Activated B cell treated with CpG ODN at 0.5 μM for 24 hours (primary cell): ENCODE measurements at regions of chr5 and their contacts with region 1.

Region 1: GRCh38 chr5:39074016-39074886 is at the start of gene RICTOR:
- DNase-seq: peak; percentile 92
- ATAC-seq: peak; percentile 81
- H3K4me3 Mint-ChIP-seq: peak within 1 kb of the TSS; percentile 97
- H3K27ac Mint-ChIP-seq: peak within 1 kb of the TSS; percentile 96
- H3K4me1 Mint-ChIP-seq: peaks cover 53% of the 10 kb centered on the region
- H3K27me3 Mint-ChIP-seq: no peaks in the 10 kb centered on the region
- CTCF ChIP-seq: no peak
- total RNA-seq, gene RICTOR: 46.4 and 51.8 TPM in 2 replicates

Region 2: DNA sequence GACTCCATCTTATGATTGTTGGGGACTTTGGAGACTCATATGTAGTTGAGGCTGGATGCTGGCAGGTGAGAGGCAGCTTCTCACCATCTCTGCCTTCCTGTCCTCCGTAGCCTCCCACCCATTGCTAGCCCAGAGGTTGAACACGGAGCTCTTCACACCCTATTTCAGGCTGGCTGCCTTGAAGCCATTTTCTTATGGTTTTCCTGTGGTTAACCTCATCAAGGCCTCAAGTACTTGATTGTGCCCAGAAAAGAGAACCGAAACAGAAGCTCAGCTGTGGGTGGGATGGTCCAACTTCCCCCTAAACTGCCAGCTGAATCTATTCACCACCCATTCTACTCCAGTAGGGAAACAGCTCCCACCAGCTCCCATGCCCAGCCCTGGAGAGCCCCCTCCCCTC is 620.7 kb before region 1 on chr5:
- CTCF ChIA-PET with region 1: no interaction called
- POLR2A ChIA-PET with region 1: no interaction called
- intact Hi-C with region 1: loop called (anchors 1 kb)
- DNase-seq: no peak
- ATAC-seq: peak; percentile 90
- H3K4me3 Mint-ChIP-seq: no peak overlapping the region
- H3K27ac Mint-ChIP-seq: no peak overlapping the region
- H3K4me1 Mint-ChIP-seq: peaks cover 15% of the 10 kb centered on the region
- H3K27me3 Mint-ChIP-seq: peaks cover 61% of the 10 kb centered on the region
- CTCF ChIP-seq: no peak

Region 3: DNA sequence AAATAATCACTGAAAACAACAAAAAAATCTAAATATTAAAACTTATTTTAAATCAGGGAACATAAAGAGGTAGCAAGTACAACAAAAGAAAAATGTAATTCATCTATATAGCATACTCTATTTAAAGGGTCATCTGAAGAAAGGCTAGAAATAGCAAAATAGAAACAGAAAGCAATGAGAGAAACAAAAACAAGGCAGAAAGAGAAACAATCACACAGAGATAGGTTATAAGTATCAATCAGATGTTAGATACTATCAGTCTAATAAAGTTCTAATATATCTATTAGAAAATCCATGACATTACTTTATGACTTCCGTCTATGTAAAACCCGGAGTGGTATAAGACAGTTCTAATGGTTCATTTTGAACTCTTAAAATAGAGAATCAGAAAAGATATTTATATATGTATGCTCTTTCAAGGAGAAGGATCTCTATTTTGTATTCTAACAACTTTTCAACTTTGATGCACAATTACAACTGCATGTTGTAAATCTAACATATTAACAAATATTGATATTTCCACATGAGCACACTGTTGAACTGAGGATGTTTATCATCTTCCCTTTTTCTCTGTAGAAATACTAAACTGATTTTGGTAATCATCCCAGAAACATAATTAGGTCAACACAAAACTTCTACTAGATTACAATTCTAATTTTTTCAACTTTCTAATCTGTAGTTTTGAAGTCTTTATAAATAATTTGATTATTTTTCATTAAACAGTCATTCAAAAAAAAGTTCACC is 15.9 kb before region 1 on chr5:
- CTCF ChIA-PET with region 1: no interaction called
- POLR2A ChIA-PET with region 1: no interaction called
- intact Hi-C with region 1: loop called (anchors 1 kb)
- DNase-seq: no peak
- ATAC-seq: peak; percentile 28
- H3K4me3 Mint-ChIP-seq: peak overlapping the region; percentile 36
- H3K27ac Mint-ChIP-seq: peak overlapping the region; percentile 30
- H3K4me1 Mint-ChIP-seq: peaks cover 53% of the 10 kb centered on the region
- H3K27me3 Mint-ChIP-seq: no peaks in the 10 kb centered on the region
- CTCF ChIP-seq: no peak

Region 4: DNA sequence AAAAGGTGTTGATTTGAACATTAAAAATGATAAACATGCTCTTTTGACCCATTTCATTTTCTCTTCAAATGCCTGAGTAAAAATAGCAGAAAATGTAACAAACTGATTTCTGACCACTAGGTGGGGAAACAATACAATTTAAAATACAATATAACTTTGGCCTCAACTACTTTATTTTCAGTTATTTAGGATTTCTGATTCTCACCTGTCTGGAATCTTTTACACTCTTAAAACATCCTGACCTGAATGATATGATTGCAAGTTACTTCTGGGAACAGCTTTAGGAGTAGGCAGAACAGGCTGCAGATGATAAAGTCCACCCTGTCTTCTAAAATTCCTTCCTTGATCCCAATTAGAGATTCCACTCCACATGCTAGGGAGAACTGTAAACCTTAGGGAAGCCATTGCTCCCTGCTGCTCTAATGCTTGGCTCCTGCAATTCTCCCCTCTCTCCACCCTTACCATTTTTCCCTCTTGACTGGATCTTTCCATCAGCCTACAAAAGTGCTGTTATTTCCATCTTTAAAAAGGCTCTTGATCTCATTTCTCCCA is 74.8 kb after region 1 on chr5:
- CTCF ChIA-PET with region 1: no interaction called
- POLR2A ChIA-PET with region 1: no interaction called
- intact Hi-C with region 1: no loop called
- DNase-seq: no peak
- ATAC-seq: no peak
- H3K4me3 Mint-ChIP-seq: no peak overlapping the region
- H3K27ac Mint-ChIP-seq: no peak overlapping the region
- H3K4me1 Mint-ChIP-seq: peaks cover 27% of the 10 kb centered on the region
- H3K27me3 Mint-ChIP-seq: no peaks in the 10 kb centered on the region
- CTCF ChIP-seq: no peak

Region 5: GRCh38 chr5:40378396-40379177 is 1304.3 kb after region 1 on chr5:
- CTCF ChIA-PET with region 1: no interaction called
- POLR2A ChIA-PET with region 1: interaction called, 10 read pairs
- intact Hi-C with region 1: no loop called
- DNase-seq: no peak
- ATAC-seq: peak; percentile 31
- H3K4me3 Mint-ChIP-seq: peak overlapping the region; percentile 4
- H3K27ac Mint-ChIP-seq: peak overlapping the region; percentile 28
- H3K4me1 Mint-ChIP-seq: peaks cover 33% of the 10 kb centered on the region
- H3K27me3 Mint-ChIP-seq: no peaks in the 10 kb centered on the region
- CTCF ChIP-seq: no peak

Region 6: GRCh38 chr5:40798012-40798855 is 1724.0 kb after region 1 on chr5 and contains the start of gene PRKAA1:
- CTCF ChIA-PET with region 1: no interaction called
- POLR2A ChIA-PET with region 1: no interaction called
- intact Hi-C with region 1: loop called (anchors 1 kb)
- DNase-seq: peak; percentile 93
- ATAC-seq: peak; percentile 96
- H3K4me3 Mint-ChIP-seq: peak within 1 kb of the TSS; percentile 91
- H3K27ac Mint-ChIP-seq: peak within 1 kb of the TSS; percentile 93
- H3K4me1 Mint-ChIP-seq: peaks cover 41% of the 10 kb centered on the region
- H3K27me3 Mint-ChIP-seq: no peaks in the 10 kb centered on the region
- CTCF ChIP-seq: no peak
- total RNA-seq, gene PRKAA1: 61.9 and 69.4 TPM in 2 replicates